Activated CD4-positive, alpha-beta memory T cell treated with anti-CD3 and anti-CD28 coated beads, Interleukin-2, amount 10 ng/mL, durations not matched to agents 7 days and 5 days (primary cell): ENCODE measurements at regions of chr3 and their contacts with region 1.

Region 1: GRCh38 chr3:196063456-196063855 is 18.4 kb downstream of the TFRC start:
- DNase-seq: no peak
- H3K4me3 Mint-ChIP-seq: no peak overlapping the region
- H3K27ac Mint-ChIP-seq: peak overlapping the region; percentile 60
- H3K4me1 Mint-ChIP-seq: peaks cover 18% of the 10 kb centered on the region
- H3K27me3 Mint-ChIP-seq: no peaks in the 10 kb centered on the region

Region 2: DNA sequence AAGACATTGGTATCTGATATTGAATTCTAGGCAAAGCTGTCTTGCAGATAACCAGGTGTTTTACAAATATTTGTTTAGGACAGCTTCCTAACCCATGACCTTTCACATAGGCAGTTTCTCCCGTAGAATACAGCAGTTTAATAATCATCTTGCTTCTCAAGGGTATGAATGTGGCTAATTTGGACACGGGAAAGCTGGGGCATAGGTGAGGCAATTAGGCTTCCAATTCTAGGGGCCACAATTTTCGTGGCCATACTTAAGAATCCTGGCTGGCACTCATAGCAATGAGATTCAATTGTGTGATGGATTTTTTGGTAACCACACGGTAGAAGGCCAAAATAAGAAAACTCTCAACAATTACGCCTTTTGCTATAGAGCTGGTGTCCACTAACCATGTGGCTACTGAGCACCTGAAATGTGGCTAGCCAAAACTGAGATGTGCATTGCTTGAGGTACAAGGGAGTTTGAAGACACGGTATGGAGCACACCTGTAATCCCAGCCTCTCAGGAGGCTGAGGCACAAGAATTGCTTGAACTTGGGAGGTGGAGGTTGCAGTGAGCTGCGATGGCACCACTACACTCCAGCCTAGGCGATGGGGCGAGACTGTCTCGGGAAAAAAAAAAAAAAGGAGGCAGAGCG is 15.9 kb before region 1 on chr3:
- CTCF ChIA-PET with region 1: no interaction called
- POLR2A ChIA-PET with region 1: interaction called, 17 read pairs
- DNase-seq: no peak
- H3K4me3 Mint-ChIP-seq: no peak overlapping the region
- H3K27ac Mint-ChIP-seq: no peak overlapping the region
- H3K4me1 Mint-ChIP-seq: no peaks in the 10 kb centered on the region
- H3K27me3 Mint-ChIP-seq: no peaks in the 10 kb centered on the region

Region 3: DNA sequence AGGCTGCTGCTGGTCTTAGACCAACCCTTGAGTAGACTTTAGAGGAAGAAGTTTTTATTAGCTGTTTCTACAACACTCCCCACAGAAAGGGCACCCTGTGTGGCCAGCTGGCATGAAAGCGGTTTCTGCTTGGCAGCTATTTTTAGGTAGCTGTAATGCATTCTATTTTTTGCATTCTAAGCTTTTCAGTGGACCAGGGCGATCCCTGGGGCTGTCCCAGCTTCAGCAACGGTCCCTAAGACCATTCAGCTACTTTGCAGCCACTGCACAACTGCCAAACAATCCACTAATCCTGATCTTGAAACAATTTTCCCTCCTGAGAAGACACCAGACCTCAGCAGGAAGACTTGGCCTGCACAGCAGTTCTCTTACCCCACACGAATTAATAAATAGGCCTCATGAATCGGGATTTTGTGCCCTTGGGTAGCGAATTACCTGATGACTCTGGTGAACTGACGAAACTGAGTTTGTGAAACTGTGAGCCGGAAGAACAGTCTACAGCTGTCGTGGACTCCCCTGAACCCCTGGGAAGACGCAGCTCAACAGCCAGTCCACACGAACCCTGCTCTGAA is 33.0 kb after region 1 on chr3:
- CTCF ChIA-PET with region 1: no interaction called
- POLR2A ChIA-PET with region 1: no interaction called
- DNase-seq: no peak
- H3K4me3 Mint-ChIP-seq: no peak overlapping the region
- H3K27ac Mint-ChIP-seq: no peak overlapping the region
- H3K4me1 Mint-ChIP-seq: peaks cover 18% of the 10 kb centered on the region
- H3K27me3 Mint-ChIP-seq: no peaks in the 10 kb centered on the region

Region 4: GRCh38 chr3:196227629-196228493 is 164.4 kb after region 1 on chr3:
- CTCF ChIA-PET with region 1: no interaction called
- POLR2A ChIA-PET with region 1: no interaction called
- DNase-seq: no peak
- H3K4me3 Mint-ChIP-seq: no peak overlapping the region
- H3K27ac Mint-ChIP-seq: no peak overlapping the region
- H3K4me1 Mint-ChIP-seq: peaks cover 1% of the 10 kb centered on the region
- H3K27me3 Mint-ChIP-seq: no peaks in the 10 kb centered on the region

Region 5: GRCh38 chr3:196274585-196274984 is 211.1 kb after region 1 on chr3:
- CTCF ChIA-PET with region 1: no interaction called
- POLR2A ChIA-PET with region 1: no interaction called
- DNase-seq: peak; percentile 81
- H3K4me3 Mint-ChIP-seq: peak overlapping the region; percentile 68
- H3K27ac Mint-ChIP-seq: peak overlapping the region; percentile 97
- H3K4me1 Mint-ChIP-seq: peaks cover 68% of the 10 kb centered on the region
- H3K27me3 Mint-ChIP-seq: no peaks in the 10 kb centered on the region